K562 (cell line): ENCODE measurements at regions of chr9 and their contacts with region 1.

Region 1: DNA sequence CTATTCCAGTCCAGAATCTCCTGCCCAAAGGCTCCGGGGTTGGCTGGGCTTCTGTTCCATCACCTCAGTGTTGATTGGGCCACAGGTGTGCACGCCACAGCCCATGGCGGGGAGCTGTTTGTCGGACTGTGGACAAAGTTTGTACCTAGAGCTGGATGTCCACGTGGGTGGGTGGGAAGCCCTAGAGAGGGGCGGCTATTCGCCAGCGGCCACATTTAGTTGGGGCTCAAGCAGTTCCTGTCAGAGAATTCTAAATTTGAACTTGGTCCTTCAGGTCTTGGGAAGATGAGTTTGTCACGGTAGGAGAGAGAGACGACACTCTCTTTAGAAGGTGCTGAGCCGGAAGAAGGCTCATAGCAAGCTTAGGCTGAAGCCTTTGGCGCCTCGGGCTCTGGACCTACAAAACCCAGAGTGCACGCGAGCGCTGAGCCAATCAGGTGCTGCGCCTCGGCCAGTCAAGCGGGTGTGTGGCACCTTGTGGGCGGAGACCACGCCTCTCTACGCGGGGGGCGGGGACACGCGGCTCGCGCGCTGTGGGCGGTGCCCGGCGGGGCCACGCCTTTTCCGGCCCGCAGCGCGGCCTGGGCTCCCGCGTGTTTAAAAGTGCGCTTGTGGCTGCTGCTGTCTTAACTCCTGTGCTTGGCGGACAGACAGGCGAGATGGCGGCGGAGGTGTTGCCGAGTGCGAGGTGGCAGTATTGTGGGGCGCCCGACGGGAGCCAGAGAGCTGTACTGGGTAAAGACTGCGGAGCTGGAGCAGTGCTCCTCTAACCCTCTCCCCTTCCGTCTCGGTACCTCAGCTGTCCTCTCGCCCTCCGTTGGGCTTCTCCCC is at the start of gene POLR1E:
- DNase-seq: peak; percentile 98 to 100 (median 100)
- ATAC-seq: peak; percentile 97
- H3K4me3 ChIP-seq: peak within 1 kb of the TSS; percentile 60
- H3K27ac ChIP-seq: peak within 1 kb of the TSS; percentile 78
- H3K4me1 ChIP-seq: peaks cover 20 to 21% of the 10 kb centered on the region in 2 experiments; a peak in 4 of 5 replicates
- H3K27me3 ChIP-seq: no peaks in the 10 kb centered on the region
- CTCF ChIP-seq: no peak
- EP300 ChIP-seq: no peak
- POLR2A ChIP-seq: peak; percentile 97
- RAD21 ChIP-seq: no peak
- polyA plus RNA-seq, gene POLR1E: 18.9 to 39.4 TPM

Region 2: GRCh38 chr9:37503736-37504135 is 18.1 kb after region 1 on chr9:
- CTCF ChIA-PET with region 1: no interaction called
- POLR2A ChIA-PET with region 1: interaction called, 44 read pairs
- in situ Hi-C with region 1: no loop called
- intact Hi-C with region 1: no loop called
- DNase-seq: no peak
- ATAC-seq: peak; percentile 40
- H3K4me3 ChIP-seq: no peak overlapping the region
- H3K27ac ChIP-seq: no peak overlapping the region
- H3K4me1 ChIP-seq: no peaks in the 10 kb centered on the region; a peak in 1 of 5 replicates
- H3K27me3 ChIP-seq: no peaks in the 10 kb centered on the region
- CTCF ChIP-seq: no peak
- EP300 ChIP-seq: no peak
- POLR2A ChIP-seq: 0 out of 2 replicates have a peak, but pooled peaks have one; percentile 16
- RAD21 ChIP-seq: no peak

Region 3: GRCh38 chr9:37565661-37566618 is 80.3 kb after region 1 on chr9:
- CTCF ChIA-PET with region 1: no interaction called
- POLR2A ChIA-PET with region 1: no interaction called
- in situ Hi-C with region 1: no loop called
- intact Hi-C with region 1: no loop called
- DNase-seq: no peak
- ATAC-seq: no peak
- H3K4me3 ChIP-seq: no peak overlapping the region
- H3K27ac ChIP-seq: no peak overlapping the region
- H3K4me1 ChIP-seq: peaks cover 0 to 2% of the 10 kb centered on the region in 2 experiments; a peak in 1 of 5 replicates
- H3K27me3 ChIP-seq: no peaks in the 10 kb centered on the region
- CTCF ChIP-seq: no peak
- EP300 ChIP-seq: no peak
- POLR2A ChIP-seq: no peak
- RAD21 ChIP-seq: no peak

Region 4: DNA sequence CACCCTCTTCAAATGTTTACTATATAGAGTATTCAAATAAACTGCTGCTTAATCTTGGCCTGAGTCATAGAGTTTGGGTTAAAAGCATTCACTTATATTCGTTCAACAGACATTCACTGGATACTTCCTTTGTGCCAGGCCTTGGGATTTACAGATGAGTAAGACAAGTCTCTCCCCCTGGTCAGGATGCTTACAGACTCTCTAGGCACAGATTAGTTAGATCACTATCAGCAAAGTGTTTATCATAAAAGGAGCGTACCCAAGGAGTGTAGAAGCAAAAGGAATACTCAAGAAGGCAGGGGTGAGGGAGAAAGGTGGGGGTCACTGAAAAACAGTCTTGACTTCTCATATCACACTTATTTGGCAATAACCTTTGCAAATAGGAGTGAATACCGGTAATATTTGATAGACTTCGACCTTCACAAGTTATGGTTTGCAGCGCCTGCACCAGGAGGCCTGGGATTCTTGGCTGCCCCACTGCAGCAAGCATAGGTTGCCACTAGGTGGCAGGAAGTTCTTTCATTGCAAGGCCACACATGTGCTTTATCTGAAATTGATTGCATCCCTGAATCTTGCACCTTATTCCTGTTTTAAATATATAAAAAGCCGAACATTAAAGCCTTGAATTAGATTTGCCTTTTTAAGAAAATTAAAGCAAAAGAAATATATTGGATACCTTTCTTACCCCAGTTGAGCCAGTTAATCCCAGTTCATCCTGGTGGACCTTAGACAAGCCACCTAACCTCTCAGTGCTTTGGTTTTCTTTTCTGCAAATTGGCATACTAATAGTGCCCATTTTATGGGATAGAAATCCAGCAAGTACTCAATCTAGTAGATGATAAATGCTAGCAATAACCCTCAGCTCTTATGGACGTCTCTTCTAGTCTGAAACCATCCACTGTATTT is 261.5 kb after region 1 on chr9:
- CTCF ChIA-PET with region 1: interaction called, 4 read pairs
- POLR2A ChIA-PET with region 1: no interaction called
- in situ Hi-C with region 1: no loop called
- intact Hi-C with region 1: loop called (anchors 5 kb)
- DNase-seq: peak; percentile 87 to 89 (median 87)
- ATAC-seq: peak; percentile 91
- H3K4me3 ChIP-seq: no peak overlapping the region
- H3K27ac ChIP-seq: no peak overlapping the region
- H3K4me1 ChIP-seq: peaks cover 11 to 17% of the 10 kb centered on the region in 2 experiments; a peak in 4 of 5 replicates
- H3K27me3 ChIP-seq: peaks cover 0 to 16% of the 10 kb centered on the region in 2 experiments; a peak in 3 of 5 replicates
- CTCF ChIP-seq: peak; percentile 96 to 98 (median 98)
- EP300 ChIP-seq: 0 out of 2 replicates have a peak, but pooled peaks have one; percentile 28
- POLR2A ChIP-seq: no peak
- RAD21 ChIP-seq: peak; percentile 81 to 95

Region 5: GRCh38 chr9:37903647-37904444 is 418.2 kb after region 1 on chr9 and contains the start of gene SLC25A51:
- CTCF ChIA-PET with region 1: no interaction called
- POLR2A ChIA-PET with region 1: interaction called, 4 read pairs
- in situ Hi-C with region 1: loop called (anchors 10 kb)
- intact Hi-C with region 1: loop called (anchors 2 kb)
- DNase-seq: peak; percentile 96 to 99 (median 98)
- ATAC-seq: peak; percentile 90
- H3K4me3 ChIP-seq: peak within 1 kb of the TSS; percentile 86
- H3K27ac ChIP-seq: peak within 1 kb of the TSS; percentile 71
- H3K4me1 ChIP-seq: peaks cover 22 to 32% of the 10 kb centered on the region in 2 experiments
- H3K27me3 ChIP-seq: no peaks in the 10 kb centered on the region
- CTCF ChIP-seq: peak; percentile 95 to 99 (median 98)
- EP300 ChIP-seq: peak; percentile 41
- POLR2A ChIP-seq: peak; percentile 83
- RAD21 ChIP-seq: peak; percentile 80
- polyA plus RNA-seq, gene SLC25A51: 9.1 to 10.6 TPM

Region 6: DNA sequence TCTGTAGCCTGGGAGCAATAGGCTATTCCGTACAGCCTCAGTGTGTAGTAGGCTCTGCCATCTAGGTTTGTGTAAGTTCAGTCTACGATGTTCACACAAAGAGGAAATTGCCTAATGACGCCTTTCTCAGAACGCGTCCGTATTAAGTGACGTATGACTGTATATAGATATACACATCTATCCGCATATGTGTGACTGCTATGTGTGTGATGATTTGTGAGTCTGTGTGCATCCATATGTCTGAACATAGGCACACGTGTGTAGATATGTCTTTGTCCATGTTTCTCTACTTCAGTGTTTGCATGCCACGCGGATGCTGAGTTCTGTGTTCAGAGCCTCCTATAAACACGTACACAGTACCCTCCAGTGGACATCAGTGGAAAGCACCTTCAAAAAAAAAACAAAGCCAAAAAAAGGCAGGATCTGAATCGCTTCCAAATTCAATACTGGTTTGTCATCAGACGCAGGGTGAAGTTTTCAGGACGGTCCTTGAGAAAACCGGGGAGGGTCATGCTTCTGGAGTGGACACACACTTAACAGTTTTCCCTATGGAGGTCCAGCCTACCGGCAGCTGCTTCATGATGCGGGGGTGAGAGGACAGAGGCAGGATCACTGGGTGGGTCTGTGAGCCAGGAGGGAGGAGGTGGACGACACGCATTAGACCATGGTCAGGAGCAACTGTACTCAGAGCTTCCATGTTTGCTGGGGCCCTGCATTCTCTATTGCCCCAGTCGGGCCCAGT is 877.4 kb after region 1 on chr9:
- CTCF ChIA-PET with region 1: interaction called, 3 read pairs
- POLR2A ChIA-PET with region 1: no interaction called
- in situ Hi-C with region 1: loop called (anchors 25 kb)
- intact Hi-C with region 1: loop called (anchors 5 kb)
- DNase-seq: peak; percentile 25 to 62 (median 46)
- ATAC-seq: peak; percentile 82
- H3K4me3 ChIP-seq: no peak overlapping the region
- H3K27ac ChIP-seq: no peak overlapping the region
- H3K4me1 ChIP-seq: peaks cover 0 to 4% of the 10 kb centered on the region in 2 experiments; a peak in 2 of 5 replicates
- H3K27me3 ChIP-seq: peaks cover 16 to 27% of the 10 kb centered on the region in 2 experiments
- CTCF ChIP-seq: peak; percentile 69 to 91 (median 86)
- EP300 ChIP-seq: no peak
- POLR2A ChIP-seq: no peak
- RAD21 ChIP-seq: peak; percentile 83 to 88